ENCODE measurements at regions of chr22 and their contacts with region 1.

Region 1: DNA sequence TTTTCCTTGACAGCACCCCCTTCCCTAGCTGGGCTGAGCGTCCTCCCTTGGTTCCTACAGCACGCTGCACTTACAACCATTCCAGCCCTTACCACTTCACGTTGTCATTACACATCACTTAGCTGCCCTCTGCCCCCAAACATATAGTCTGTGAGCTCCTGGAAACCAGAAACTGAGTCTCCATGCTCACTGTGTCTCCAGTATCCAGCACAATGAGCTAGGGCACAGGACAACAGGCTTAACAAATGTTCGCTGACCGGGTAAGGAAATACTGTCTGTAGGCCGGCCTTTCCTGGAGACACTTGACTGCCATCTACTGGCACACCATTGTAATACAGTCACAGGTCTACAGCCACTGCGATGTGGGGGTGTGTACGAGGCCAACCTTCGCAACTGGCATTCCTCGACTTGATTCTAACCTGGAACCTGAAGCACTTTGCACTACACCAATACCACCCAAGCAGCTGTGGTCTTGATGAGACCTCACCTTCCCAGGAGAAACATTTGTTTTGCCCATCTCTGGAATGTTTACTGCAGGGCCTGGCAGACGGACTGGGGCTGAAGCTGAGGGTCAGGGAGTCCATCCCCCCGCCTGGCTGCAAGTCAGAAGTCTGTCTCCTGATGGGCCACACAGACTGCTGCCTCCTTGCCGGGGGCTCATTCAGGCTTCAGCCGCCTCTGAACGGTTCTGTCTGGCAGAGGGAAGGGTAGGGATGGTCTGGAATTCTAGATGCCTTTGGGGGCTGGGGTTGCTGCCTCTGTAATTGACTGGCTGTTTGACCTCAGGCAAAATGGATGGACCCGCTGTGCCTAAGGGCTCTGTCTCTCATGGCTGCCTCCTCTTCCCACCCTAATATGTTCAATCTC is 72.0 kb downstream of the SYN3 start:
- DNase-seq: peak; percentile 78

Region 2: DNA sequence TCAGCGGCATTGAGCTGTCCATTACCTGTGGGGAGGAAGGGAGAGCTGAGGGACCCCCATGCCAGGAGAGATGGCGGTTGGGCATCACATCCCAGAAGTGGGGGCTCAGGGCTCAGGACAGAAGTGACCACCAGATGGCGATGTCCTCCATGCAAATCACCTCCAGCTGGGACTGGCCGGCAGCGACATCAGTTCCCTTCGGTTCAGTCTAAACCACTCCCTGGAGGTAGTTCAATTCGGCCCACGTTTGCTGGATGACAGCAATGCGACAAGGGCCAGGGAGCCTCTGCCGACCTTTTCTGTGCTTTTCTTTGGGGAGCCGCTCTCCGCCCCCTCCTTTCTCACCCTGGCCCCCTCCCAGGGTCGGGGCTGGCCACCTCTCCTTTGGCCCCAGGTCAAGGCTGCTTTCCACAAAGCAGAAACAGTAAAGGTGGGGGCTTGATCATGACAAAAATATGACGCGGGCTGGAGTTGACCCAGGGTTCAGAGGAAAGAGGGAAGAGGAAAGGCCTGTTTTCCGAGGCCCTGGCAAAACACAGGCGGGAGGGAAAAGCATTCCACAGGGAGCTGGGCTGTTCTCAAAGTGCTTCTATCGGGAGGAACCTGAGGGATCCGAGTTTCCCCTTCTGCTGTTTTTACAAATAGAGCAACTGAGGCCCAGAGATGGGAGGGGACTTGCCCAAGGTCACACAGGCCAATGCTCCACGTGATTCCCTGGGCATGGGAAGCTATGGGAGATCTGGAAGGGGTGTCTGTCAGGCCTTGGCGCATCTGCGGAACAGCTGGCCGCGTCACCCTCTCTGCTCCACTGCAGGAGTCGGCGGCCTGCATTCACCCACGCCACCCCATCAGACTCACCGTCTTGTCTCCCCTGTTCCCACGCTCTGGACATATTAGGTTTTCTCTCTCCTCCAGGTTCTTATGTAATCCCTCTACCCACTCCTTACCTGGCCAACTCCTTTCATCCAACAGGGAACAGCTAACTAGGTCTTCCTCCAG is 456.8 kb before region 1 on chr22:
- in situ Hi-C with region 1: loop called (anchors 25 kb)
- DNase-seq: peak; percentile 76

Region 3: GRCh38 chr22:32558681-32559355 is 427.3 kb before region 1 on chr22:
- in situ Hi-C with region 1: no loop called
- DNase-seq: no peak

Region 4: GRCh38 chr22:32836280-32837123 is 149.6 kb before region 1 on chr22:
- in situ Hi-C with region 1: loop called (anchors 25 kb)
- DNase-seq: peak; percentile 26

Region 5: DNA sequence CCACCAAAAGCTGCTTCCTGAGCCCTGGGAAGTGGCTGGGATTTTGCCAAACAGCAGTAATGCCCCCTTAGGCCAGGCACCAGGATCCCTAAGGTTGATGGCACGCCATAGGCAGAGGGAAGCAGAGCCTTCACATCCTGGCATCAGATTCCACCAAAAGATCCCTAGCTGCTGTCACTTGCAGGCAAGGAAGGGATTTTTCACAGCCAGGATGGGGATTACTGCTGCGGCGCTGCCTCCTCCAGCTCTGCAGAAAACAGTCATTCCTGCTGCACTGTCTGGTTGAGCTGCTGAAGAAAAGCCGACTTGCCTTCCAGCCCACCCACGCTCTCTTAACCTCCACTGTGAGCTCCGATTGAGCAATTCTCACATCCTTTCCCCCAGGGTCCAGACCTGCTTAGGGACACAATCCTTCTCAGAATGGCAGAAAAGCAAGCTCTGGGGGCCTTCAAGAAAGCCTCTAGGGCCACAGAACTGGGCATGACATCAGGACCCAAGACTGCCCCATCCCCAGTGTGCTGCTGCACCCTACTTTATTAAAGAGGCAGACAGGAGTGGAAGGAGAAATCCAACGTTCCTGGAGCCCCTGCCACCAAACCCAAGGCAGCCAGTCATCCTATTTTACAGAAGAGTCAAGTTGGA is 52.1 kb after region 1 on chr22:
- in situ Hi-C with region 1: no loop called
- DNase-seq: no peak

Region 6: DNA sequence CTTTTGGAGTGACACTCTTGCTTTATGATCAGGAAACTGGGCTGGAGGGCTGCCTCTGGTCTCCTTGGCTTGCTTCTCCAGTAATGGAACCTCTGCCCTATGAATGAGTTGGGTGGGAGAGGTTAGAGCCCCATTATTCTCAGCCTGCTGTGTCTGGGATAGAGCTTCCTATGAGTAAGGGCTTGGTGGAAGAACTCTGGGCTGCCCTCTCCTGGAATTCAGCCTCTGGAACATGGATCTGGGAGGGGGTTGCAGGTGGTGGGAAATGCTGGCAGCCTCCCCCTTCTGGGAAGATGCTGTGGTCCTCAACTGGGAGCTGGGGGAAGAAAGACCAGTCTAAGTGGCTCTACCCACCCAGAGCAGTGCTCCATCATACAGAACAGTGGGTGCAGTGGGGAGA is 153.8 kb after region 1 on chr22:
- in situ Hi-C with region 1: no loop called
- DNase-seq: no peak